Activated T-helper 2 cell treated with anti-CD3 and anti-CD28 coated beads, Interferon-gamma antibody, Interleukin-2, Interleukin-4, amounts not matched to agents 10 μg/mL and 5 μg/mL and 100 μg/mL, durations not matched to agents 14 hours and 24 hours and 36 hours (primary cell): ENCODE measurements at regions of chr18 and their contacts with region 1.

Region 1: GRCh38 chr18:49169037-49169521 is 218.3 kb upstream of the SMAD7 start:
- DNase-seq: peak; percentile 11
- H3K4me3 Mint-ChIP-seq: no peak overlapping the region
- H3K27ac Mint-ChIP-seq: no peak overlapping the region
- H3K4me1 Mint-ChIP-seq: peaks cover 43% of the 10 kb centered on the region
- H3K27me3 Mint-ChIP-seq: peaks cover 2% of the 10 kb centered on the region

Region 2: DNA sequence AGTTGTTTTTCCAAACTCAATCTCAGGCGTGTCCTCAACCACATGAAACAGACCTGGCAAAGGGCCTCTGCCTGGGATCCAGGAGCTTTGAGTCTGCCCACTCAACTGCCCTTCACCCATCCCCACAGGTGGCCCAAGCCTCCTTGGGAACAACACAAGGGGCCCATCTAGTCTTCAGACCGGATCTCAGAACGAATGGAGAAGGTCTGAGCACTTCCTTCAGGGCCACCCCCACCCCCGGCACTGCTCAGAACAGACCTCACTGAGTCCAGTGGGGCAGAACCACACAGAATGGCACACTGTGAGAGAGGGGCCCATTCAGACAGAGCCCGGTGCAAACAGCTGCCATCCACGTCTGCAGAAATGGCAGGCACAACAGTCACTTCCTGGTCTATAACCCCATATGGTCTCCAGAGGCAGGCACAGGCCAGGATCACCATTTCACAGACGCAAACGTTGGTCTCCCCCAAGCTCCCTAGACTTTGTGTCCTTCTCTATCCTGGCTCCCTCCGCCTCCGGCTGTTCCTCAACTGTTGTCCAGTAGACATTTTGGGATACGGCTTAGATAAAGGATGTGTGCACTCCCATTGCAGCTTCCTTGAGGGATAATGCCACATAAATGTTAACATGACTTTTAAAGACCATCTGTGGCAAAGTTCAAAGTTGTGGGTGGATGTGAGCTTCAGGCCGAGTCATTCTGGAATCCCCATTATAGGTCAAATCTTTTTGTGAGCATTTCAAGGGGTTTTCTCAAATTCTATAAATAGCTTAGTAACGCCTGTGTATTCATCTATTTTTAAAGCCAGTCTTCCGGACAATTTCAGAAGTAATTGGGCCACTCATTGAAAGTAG is 368.0 kb before region 1 on chr18:
- intact Hi-C with region 1: no loop called
- DNase-seq: no peak
- H3K4me3 Mint-ChIP-seq: peak overlapping the region; percentile 46
- H3K27ac Mint-ChIP-seq: peak overlapping the region; percentile 94
- H3K4me1 Mint-ChIP-seq: peaks cover 61% of the 10 kb centered on the region
- H3K27me3 Mint-ChIP-seq: no peaks in the 10 kb centered on the region

Region 3: DNA sequence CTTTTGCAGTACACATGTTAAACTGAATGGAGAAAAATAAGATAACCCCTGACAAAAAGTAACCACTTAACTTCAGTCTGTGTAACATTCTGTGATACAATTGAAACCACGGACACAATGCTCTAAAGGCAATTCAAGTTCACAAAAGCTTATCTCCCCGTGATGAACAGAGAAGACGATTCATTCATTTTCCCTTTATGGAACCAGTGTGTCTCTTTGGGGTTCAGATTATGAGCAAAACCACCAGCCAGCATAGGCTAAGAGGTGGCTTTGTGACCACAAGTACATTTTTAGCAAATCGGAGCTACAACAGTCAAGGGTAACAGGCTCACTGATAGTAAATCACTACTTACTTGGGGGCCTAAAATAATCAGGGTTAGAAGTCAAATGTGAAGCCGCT is 97.8 kb before region 1 on chr18:
- intact Hi-C with region 1: loop called (anchors 2 kb)
- DNase-seq: no peak
- H3K4me3 Mint-ChIP-seq: no peak overlapping the region
- H3K27ac Mint-ChIP-seq: peak overlapping the region; percentile 28
- H3K4me1 Mint-ChIP-seq: peaks cover 34% of the 10 kb centered on the region
- H3K27me3 Mint-ChIP-seq: no peaks in the 10 kb centered on the region

Region 4: GRCh38 chr18:49227441-49228165 is 58.5 kb after region 1 on chr18:
- intact Hi-C with region 1: loop called (anchors 1 kb)
- DNase-seq: peak; percentile 68
- H3K4me3 Mint-ChIP-seq: no peak overlapping the region
- H3K27ac Mint-ChIP-seq: no peak overlapping the region
- H3K4me1 Mint-ChIP-seq: peaks cover 31% of the 10 kb centered on the region
- H3K27me3 Mint-ChIP-seq: no peaks in the 10 kb centered on the region